ENCODE measurements at regions of chrX and their contacts with region 1.

Region 1: GRCh38 chrX:108304210-108304609 is 134.0 kb downstream of the COL4A6 start:
- DNase-seq: no peak
- ATAC-seq: no peak
- H3K4me3 ChIP-seq: no peak overlapping the region
- H3K27ac ChIP-seq: no peak overlapping the region
- H3K4me1 ChIP-seq: peaks cover 0 to 8% (median 0%) of the 10 kb centered on the region in 12 donors
- H3K27me3 ChIP-seq: peaks cover 0 to 20% (median 0%) of the 10 kb centered on the region in 9 donors
- CTCF ChIP-seq: peak in 9 of 12 donors; percentile 13 to 46 (median 37)
- POLR2A ChIP-seq: no peak

Region 2: GRCh38 chrX:108224727-108225621 is 79.2 kb before region 1 on chrX:
- intact Hi-C with region 1: loop called in 7 of 10 experiments (anchors 2 to 10 kb)
- DNase-seq: no peak
- ATAC-seq: peak; percentile 25 to 62 (median 48)
- H3K4me3 ChIP-seq: no peak overlapping the region
- H3K27ac ChIP-seq: peak overlapping the region in 1 of 12 donors; percentile 24
- H3K4me1 ChIP-seq: peaks cover 0 to 12% (median 0%) of the 10 kb centered on the region in 12 donors
- H3K27me3 ChIP-seq: peaks cover 0 to 48% (median 0%) of the 10 kb centered on the region in 9 donors
- CTCF ChIP-seq: peak; percentile 33 to 60 (median 48)
- POLR2A ChIP-seq: no peak

Region 3: GRCh38 chrX:108380222-108380621 is 76.0 kb after region 1 on chrX:
- intact Hi-C with region 1: loop called in 1 of 10 experiments (anchors 5 kb)
- DNase-seq: no peak
- ATAC-seq: no peak
- H3K4me3 ChIP-seq: no peak overlapping the region
- H3K27ac ChIP-seq: no peak overlapping the region
- H3K4me1 ChIP-seq: no peaks in the 10 kb centered on the region
- H3K27me3 ChIP-seq: no peaks in the 10 kb centered on the region
- CTCF ChIP-seq: no peak
- POLR2A ChIP-seq: no peak

Region 4: GRCh38 chrX:108439434-108439883 is 135.2 kb after region 1 on chrX and contains the start of gene COL4A5:
- intact Hi-C with region 1: loop called in 2 of 10 experiments (anchors 5 to 10 kb)
- DNase-seq: peak in 4 of 5 donors; percentile 45 to 59 (median 54)
- ATAC-seq: peak; percentile 84 to 92 (median 90)
- H3K4me3 ChIP-seq: peak within 1 kb of the TSS; percentile 11 to 68 (median 54)
- H3K27ac ChIP-seq: peak within 1 kb of the TSS in 11 of 12 donors; percentile 0 to 82 (median 66)
- H3K4me1 ChIP-seq: no peaks in the 10 kb centered on the region
- H3K27me3 ChIP-seq: peaks cover 0 to 45% (median 0%) of the 10 kb centered on the region in 9 donors
- CTCF ChIP-seq: no peak
- POLR2A ChIP-seq: no peak
- total RNA-seq, gene COL4A5: 4.2 to 12.7 (median 7.7) TPM

Region 5: GRCh38 chrX:108537005-108537404 is 232.8 kb after region 1 on chrX:
- intact Hi-C with region 1: loop called in 3 of 10 experiments (anchors 10 kb)
- DNase-seq: no peak
- ATAC-seq: peak in 1 of 4 donors; percentile 51
- H3K4me3 ChIP-seq: no peak overlapping the region
- H3K27ac ChIP-seq: no peak overlapping the region
- H3K4me1 ChIP-seq: no peaks in the 10 kb centered on the region
- H3K27me3 ChIP-seq: peaks cover 0 to 6% (median 0%) of the 10 kb centered on the region in 9 donors
- CTCF ChIP-seq: peak; percentile 36 to 65 (median 56)
- POLR2A ChIP-seq: no peak

Measured in heart left ventricle (tissue), 16 donors.